CD4-positive, alpha-beta T cell (primary cell): ENCODE measurements at regions of chr1 and their contacts with region 1.

Region 1: DNA sequence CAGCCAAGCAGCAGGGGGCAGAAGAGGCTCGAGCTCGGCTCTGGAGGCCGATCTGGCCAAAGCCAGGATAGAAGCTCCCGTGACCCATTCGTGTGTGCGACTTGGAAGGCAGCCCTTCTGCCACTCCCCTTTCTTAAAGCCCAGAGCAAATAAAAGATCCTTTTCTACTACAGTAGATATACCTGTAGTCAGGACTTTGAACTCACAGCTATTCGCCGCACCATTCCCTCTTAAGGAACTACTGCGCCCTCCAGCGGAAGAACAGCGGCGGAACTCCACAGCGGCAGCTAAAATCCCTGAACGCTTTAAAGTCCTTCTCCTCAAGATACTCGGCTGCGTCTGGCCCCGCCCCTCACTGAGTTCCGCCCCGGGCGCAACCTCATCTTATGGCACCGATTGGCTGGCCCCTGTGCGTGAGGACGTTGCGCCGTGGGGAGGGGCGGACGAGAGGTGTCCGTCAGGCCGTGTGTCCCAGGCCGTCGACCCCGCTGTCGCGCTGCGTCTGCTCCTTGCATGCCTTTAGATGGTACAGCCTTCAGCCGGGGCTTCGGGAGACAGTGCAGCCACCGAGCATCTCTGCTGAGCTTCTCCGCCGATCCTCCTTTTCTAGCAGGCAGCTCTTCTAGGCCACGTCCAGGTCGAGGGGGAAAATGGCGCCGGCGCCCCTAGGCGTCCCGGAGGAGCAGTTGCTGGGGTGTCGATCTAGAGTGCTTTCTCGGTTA is at the start of gene LRIG2:
- DNase-seq: peak; percentile 94 to 99 (median 98)
- ATAC-seq: peak; percentile 96
- H3K4me3 ChIP-seq: peak within 1 kb of the TSS; percentile 78
- H3K4me3 Mint-ChIP-seq: peak within 1 kb of the TSS; percentile 92
- H3K27ac ChIP-seq: peak within 1 kb of the TSS; percentile 74 to 75
- H3K27ac Mint-ChIP-seq: peak within 1 kb of the TSS; percentile 84
- H3K4me1 ChIP-seq: peaks cover 31% of the 10 kb centered on the region
- H3K4me1 Mint-ChIP-seq: peaks cover 34% of the 10 kb centered on the region
- H3K27me3 ChIP-seq: no peaks in the 10 kb centered on the region
- H3K27me3 Mint-ChIP-seq: no peaks in the 10 kb centered on the region
- CTCF ChIP-seq: peak; percentile 96
- total RNA-seq, gene LRIG2: 12.9 to 15.8 TPM

Region 2: DNA sequence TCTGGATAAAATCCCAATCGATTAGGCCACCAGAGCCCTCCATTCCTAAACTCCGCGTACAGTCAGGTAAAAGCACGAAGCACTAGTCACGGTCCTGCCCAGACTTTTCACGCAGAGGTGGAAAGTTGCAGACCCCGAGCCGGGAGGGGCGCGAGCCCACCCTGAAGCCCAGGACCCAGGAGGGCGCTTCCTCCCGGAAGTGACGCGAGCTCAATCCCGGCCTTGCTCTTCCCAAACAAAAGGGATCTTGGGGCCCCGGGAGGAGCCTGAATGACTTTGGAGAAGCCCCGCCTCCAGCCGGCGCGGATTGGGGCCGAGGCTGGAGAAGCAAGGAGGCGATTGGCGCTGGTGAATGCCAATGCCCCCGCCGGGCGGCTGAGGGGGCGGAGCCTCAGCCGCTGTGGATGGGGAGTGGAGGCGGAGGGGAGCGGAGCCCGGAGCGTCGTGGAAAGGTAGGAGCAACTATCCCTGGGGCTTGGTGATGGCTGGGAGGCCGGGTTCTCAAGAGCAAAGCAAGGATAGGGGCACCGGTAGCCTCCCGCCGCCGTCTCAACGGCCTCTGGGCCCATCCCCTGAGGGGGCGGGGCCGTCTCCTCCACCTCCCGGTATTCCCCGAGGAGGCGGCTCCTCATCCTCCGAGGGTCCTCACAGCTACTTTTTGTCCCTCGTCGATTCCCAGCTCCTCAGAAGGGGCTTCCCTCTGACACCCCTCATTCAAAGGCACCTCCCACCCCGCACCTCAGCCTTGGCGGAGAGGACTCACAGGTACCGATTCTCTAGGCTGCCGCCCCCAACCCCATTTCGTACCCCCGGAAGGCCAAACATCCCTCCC is 676.9 kb before region 1 on chr1 and contains the start of gene CTTNBP2NL:
- CTCF ChIA-PET with region 1: interaction called, 3 read pairs
- POLR2A ChIA-PET with region 1: no interaction called
- intact Hi-C with region 1: loop called in 1 of 2 experiments (anchors 5 kb)
- DNase-seq: peak; percentile 58 to 88 (median 70)
- ATAC-seq: peak; percentile 98
- H3K4me3 ChIP-seq: peak within 1 kb of the TSS; percentile 99
- H3K4me3 Mint-ChIP-seq: peak within 1 kb of the TSS; percentile 97
- H3K27ac ChIP-seq: no peak within 1 kb of the TSS
- H3K27ac Mint-ChIP-seq: peak within 1 kb of the TSS; percentile 27
- H3K4me1 ChIP-seq: peaks cover 20% of the 10 kb centered on the region
- H3K4me1 Mint-ChIP-seq: peaks cover 20% of the 10 kb centered on the region
- H3K27me3 ChIP-seq: peaks cover 6 to 10% of the 10 kb centered on the region in 2 experiments
- H3K27me3 Mint-ChIP-seq: peaks cover 13% of the 10 kb centered on the region
- CTCF ChIP-seq: no peak
- total RNA-seq, gene CTTNBP2NL: 0.14 to 0.25 TPM

Region 3: GRCh38 chr1:112882271-112882744 is 190.6 kb before region 1 on chr1:
- CTCF ChIA-PET with region 1: interaction called, 17 read pairs
- POLR2A ChIA-PET with region 1: interaction called, 3 read pairs
- intact Hi-C with region 1: loop called (anchors 2 kb)
- DNase-seq: no peak
- ATAC-seq: no peak
- H3K4me3 ChIP-seq: no peak overlapping the region
- H3K4me3 Mint-ChIP-seq: no peak overlapping the region
- H3K27ac ChIP-seq: no peak overlapping the region
- H3K27ac Mint-ChIP-seq: no peak overlapping the region
- H3K4me1 ChIP-seq: no peaks in the 10 kb centered on the region
- H3K4me1 Mint-ChIP-seq: no peaks in the 10 kb centered on the region
- H3K27me3 ChIP-seq: no peaks in the 10 kb centered on the region
- H3K27me3 Mint-ChIP-seq: peaks cover 12% of the 10 kb centered on the region
- CTCF ChIP-seq: no peak

Region 4: GRCh38 chr1:113088972-113089371 is 16.1 kb after region 1 on chr1:
- CTCF ChIA-PET with region 1: interaction called, 15 read pairs
- POLR2A ChIA-PET with region 1: interaction called, 8 read pairs
- intact Hi-C with region 1: no loop called
- DNase-seq: no peak
- ATAC-seq: no peak
- H3K4me3 ChIP-seq: no peak overlapping the region
- H3K4me3 Mint-ChIP-seq: no peak overlapping the region
- H3K27ac ChIP-seq: no peak overlapping the region
- H3K27ac Mint-ChIP-seq: no peak overlapping the region
- H3K4me1 ChIP-seq: no peaks in the 10 kb centered on the region
- H3K4me1 Mint-ChIP-seq: peaks cover 37% of the 10 kb centered on the region
- H3K27me3 ChIP-seq: no peaks in the 10 kb centered on the region
- H3K27me3 Mint-ChIP-seq: no peaks in the 10 kb centered on the region
- CTCF ChIP-seq: no peak

Region 5: DNA sequence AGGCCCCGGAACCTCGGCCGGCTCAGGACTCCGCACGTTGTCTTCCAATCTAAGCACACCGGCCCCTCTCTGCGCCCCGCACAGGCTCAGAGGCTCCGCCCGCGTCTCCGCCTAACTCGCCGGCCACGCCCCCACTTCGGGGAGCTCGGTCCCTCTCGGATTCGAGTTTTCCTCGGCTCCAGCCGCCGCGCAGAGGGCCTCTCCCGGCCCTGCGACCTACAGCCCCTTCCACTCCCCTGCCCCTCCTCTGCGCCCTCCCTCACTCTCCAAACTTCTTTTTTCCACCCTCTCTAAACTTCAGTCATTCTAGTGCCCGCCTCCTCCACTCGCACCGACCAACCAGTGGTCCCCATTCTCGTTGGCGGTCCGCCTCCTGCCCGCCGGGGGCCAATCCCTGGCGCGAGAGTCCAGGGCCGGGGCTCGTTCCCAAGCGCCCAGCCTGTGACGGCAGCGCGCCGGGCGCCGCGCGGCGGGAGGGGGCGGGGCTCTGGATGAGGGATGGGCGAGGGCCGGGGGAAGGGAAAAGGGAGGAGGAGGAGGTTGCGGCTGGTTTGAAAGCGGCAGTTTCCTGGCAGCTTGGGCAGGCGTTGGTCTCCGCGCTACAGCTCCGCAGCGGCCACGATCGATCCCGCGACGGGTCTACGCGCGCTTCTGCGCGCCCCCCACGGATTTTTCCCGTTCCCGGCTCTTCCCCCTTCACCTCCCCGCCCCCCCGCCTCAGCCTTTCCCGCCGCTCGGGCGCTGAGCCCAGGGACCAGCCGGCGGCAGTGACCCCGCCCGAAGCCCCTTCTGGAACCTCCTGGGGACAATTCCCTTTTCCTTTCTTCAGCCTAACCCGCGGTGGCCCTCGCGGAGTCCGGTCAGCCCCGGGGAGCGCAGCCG is 317.3 kb after region 1 on chr1 and contains the start of gene MAGI3:
- CTCF ChIA-PET with region 1: interaction called, 4 read pairs
- POLR2A ChIA-PET with region 1: interaction called, 4 read pairs
- intact Hi-C with region 1: loop called in 1 of 2 experiments (anchors 5 kb)
- DNase-seq: peak; percentile 83 to 97 (median 92)
- ATAC-seq: peak; percentile 87
- H3K4me3 ChIP-seq: peak within 1 kb of the TSS; percentile 91
- H3K4me3 Mint-ChIP-seq: peak within 1 kb of the TSS; percentile 92
- H3K27ac ChIP-seq: peak within 1 kb of the TSS; percentile 43 to 46
- H3K27ac Mint-ChIP-seq: peak within 1 kb of the TSS; percentile 67
- H3K4me1 ChIP-seq: peaks cover 25% of the 10 kb centered on the region
- H3K4me1 Mint-ChIP-seq: peaks cover 28% of the 10 kb centered on the region
- H3K27me3 ChIP-seq: no peaks in the 10 kb centered on the region
- H3K27me3 Mint-ChIP-seq: no peaks in the 10 kb centered on the region
- CTCF ChIP-seq: no peak
- total RNA-seq, gene MAGI3: 6.7 to 8.7 TPM

Region 6: DNA sequence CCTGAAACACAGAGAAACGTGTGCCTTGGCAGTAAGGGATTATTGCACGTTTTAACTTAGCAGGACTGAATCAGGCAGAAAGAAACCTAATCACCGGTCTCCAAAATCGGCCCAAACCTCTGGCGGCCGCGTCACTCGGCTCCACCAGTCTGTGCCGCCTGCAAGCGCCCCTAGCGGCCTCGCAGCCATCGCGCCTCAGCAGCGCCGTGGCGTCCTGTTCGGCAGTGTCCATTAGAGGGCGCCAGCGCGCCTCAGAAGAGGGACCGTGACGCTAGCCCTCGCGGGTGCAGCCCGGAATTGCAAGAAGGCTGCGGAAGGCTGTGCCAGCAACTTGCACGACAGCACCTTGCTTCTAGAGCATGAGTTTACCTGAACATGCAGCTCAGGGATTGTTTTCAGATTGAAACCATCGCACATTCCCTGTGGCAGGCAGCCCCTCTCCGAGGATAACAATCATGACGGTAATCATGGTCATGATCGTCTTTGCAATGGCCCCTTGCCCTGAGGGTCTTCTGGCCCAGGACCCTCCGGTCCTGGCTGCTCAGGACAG is 1273.6 kb after region 1 on chr1:
- CTCF ChIA-PET with region 1: no interaction called
- POLR2A ChIA-PET with region 1: no interaction called
- intact Hi-C with region 1: loop called in 1 of 2 experiments (anchors 5 kb)
- DNase-seq: peak; percentile 92 to 99 (median 98)
- ATAC-seq: peak; percentile 98
- H3K4me3 ChIP-seq: peak overlapping the region; percentile 55
- H3K4me3 Mint-ChIP-seq: peak overlapping the region; percentile 97
- H3K27ac ChIP-seq: peak overlapping the region in 1 of 2 donors; percentile 22
- H3K27ac Mint-ChIP-seq: peak overlapping the region; percentile 79
- H3K4me1 ChIP-seq: peaks cover 49% of the 10 kb centered on the region
- H3K4me1 Mint-ChIP-seq: peaks cover 31% of the 10 kb centered on the region
- H3K27me3 ChIP-seq: no peaks in the 10 kb centered on the region
- H3K27me3 Mint-ChIP-seq: no peaks in the 10 kb centered on the region
- CTCF ChIP-seq: peak; percentile 100